Endothelial cell of umbilical vein (primary cell): ENCODE measurements at regions of chr3 and their contacts with region 1.

Region 1: DNA sequence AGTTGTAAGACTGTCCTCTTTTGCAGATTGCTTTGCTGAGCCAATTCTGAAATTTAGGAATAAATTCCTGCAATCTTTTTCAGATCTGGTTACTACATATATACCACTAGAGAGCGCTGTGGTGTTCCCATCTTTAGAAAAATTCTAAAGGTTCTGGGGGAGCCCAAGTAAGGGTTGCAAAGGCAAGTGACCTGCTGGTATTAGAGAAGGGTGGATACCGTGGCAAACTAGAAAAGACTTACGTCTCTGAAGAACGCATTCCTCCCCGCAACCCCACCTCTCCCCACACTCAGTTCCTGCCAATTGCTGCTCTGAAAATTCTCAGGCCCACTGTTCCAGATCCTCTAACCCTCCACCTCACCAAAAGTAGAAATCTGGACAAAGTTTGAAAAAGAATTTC is 48.5 kb downstream of the EFHB start:
- DNase-seq: peak; percentile 47
- H3K4me3 ChIP-seq: no peak overlapping the region
- H3K27ac ChIP-seq: no peak overlapping the region
- H3K4me1 ChIP-seq: peaks cover 20% of the 10 kb centered on the region
- H3K27me3 ChIP-seq: no peaks in the 10 kb centered on the region
- CTCF ChIP-seq: peak; percentile 46 to 51
- POLR2A ChIP-seq: no peak

Region 2: DNA sequence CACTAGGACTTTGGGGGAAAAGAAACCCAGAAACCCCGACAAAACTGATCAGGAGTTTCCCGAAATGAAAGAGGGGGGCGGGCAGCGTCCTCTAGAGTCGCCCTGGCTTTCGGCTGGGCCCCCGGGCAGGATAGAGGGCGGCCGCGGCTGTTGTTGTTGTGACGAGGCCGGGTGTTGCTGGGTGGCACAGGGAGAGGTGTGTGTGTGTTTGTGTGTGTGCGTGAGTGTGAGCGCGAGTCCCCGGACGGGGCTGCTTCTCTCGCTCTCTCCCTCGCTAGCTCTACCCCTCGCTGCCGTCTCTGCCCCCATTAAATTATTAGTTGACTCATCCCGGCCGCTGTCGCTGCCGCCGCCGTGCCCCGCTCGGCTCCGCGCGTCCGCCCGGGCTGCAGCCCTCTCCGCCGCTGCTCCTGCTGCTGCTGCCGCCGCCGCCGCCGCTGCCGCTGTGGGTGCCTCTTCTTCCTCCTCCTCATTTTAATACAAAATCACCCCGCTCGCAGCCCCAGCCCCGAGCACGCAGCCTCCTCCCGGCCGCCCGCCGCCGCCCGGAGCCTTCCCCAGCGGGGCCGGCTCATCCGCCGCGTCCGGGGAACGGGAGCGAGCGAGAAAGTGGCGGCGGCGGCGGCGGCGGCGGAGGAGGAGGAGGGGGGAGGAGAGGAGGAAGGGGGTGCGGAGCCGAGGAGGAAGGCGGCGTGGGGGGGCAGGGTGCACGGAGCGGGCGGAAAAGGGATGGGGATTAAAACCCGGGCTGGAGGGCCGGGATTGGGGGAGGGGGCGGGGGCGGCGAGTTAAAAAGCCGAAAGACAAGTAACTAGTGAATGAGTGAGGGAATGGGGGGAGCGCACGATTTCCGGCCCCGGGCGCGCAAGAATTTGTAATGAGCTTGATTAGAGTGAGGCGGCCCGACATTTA is 1460.5 kb before region 1 on chr3 and contains the start of gene SATB1:
- CTCF ChIA-PET with region 1: no interaction called
- POLR2A ChIA-PET with region 1: no interaction called
- dilution Hi-C with region 1: no loop called
- intact Hi-C with region 1: loop called (anchors 5 kb)
- DNase-seq: peak; percentile 48
- H3K4me3 ChIP-seq: peak within 1 kb of the TSS; percentile 66 to 72 (median 68)
- H3K27ac ChIP-seq: no peak within 1 kb of the TSS
- H3K4me1 ChIP-seq: peaks cover 8% of the 10 kb centered on the region
- H3K27me3 ChIP-seq: peaks cover 10 to 39% of the 10 kb centered on the region in 2 experiments
- CTCF ChIP-seq: no peak
- POLR2A ChIP-seq: no peak
- total RNA-seq, gene SATB1: 6.2 and 6.7 TPM in 2 replicates

Region 3: GRCh38 chr3:19901337-19901736 is 15.9 kb after region 1 on chr3:
- CTCF ChIA-PET with region 1: interaction called, 46 read pairs
- POLR2A ChIA-PET with region 1: no interaction called
- dilution Hi-C with region 1: no loop called
- intact Hi-C with region 1: loop called (anchors 2 kb)
- DNase-seq: peak; percentile 31
- H3K4me3 ChIP-seq: no peak overlapping the region
- H3K27ac ChIP-seq: no peak overlapping the region
- H3K4me1 ChIP-seq: no peaks in the 10 kb centered on the region
- H3K27me3 ChIP-seq: no peaks in the 10 kb centered on the region
- CTCF ChIP-seq: no peak
- POLR2A ChIP-seq: no peak

Region 4: DNA sequence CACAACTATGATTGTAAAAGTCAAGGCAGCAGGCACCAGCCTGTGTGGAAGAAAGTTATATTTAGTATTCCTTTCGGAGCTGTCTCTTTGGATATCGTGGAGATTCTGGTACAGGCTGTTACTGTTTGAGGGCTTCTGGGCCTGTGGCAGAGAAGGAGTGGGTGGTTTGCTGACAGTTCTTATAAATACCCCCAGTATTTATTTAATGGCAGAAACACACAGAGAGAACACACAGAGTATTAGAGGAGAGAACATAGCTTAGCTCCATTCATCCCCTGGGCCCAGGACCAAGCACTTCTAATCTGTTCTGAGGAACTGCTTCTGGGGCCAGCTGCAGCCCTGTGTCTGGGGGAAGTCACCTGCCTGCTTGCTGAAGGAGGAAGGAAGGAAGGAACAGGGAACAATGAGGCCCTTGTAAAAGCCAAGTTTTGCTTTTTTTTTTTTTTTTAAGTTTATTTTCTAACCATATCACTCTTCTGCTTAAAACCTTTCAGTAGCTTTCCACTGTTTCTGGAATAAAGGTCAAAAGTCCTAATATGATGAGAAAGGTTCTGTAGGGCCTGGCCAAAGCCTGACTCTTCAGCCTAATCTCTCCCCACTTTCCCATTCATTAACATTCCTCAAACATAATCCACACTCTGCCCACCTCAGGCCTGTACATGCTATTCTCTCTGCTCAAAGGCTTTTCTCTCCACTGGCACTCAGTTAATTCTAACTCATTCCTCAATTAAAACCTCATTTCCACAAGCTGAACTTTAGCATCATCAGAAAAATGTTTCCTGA is 138.3 kb after region 1 on chr3:
- CTCF ChIA-PET with region 1: interaction called, 4 read pairs
- POLR2A ChIA-PET with region 1: no interaction called
- dilution Hi-C with region 1: no loop called
- intact Hi-C with region 1: loop called (anchors 1 kb)
- DNase-seq: peak; percentile 70
- H3K4me3 ChIP-seq: no peak overlapping the region
- H3K27ac ChIP-seq: peak overlapping the region; percentile 13
- H3K4me1 ChIP-seq: peaks cover 21% of the 10 kb centered on the region
- H3K27me3 ChIP-seq: no peaks in the 10 kb centered on the region
- CTCF ChIP-seq: no peak
- POLR2A ChIP-seq: no peak

Region 5: GRCh38 chr3:20154931-20155330 is 269.5 kb after region 1 on chr3:
- CTCF ChIA-PET with region 1: interaction called, 3 read pairs
- POLR2A ChIA-PET with region 1: no interaction called
- dilution Hi-C with region 1: no loop called
- intact Hi-C with region 1: loop called (anchors 5 kb)
- DNase-seq: no peak
- H3K4me3 ChIP-seq: no peak overlapping the region
- H3K27ac ChIP-seq: no peak overlapping the region
- H3K4me1 ChIP-seq: no peaks in the 10 kb centered on the region
- H3K27me3 ChIP-seq: no peaks in the 10 kb centered on the region
- CTCF ChIP-seq: no peak
- POLR2A ChIP-seq: no peak

Region 6: GRCh38 chr3:20256144-20256543 is 370.7 kb after region 1 on chr3:
- CTCF ChIA-PET with region 1: no interaction called
- POLR2A ChIA-PET with region 1: no interaction called
- dilution Hi-C with region 1: no loop called
- intact Hi-C with region 1: loop called (anchors 2 kb)
- DNase-seq: peak; percentile 92
- H3K4me3 ChIP-seq: peak overlapping the region in 1 of 3 experiments; percentile 11
- H3K27ac ChIP-seq: peak overlapping the region; percentile 83
- H3K4me1 ChIP-seq: peaks cover 18% of the 10 kb centered on the region
- H3K27me3 ChIP-seq: no peaks in the 10 kb centered on the region
- CTCF ChIP-seq: no peak
- POLR2A ChIP-seq: no peak

Region 7: GRCh38 chr3:20307383-20307782 is 421.9 kb after region 1 on chr3:
- CTCF ChIA-PET with region 1: no interaction called
- POLR2A ChIA-PET with region 1: no interaction called
- dilution Hi-C with region 1: no loop called
- intact Hi-C with region 1: no loop called
- DNase-seq: no peak
- H3K4me3 ChIP-seq: no peak overlapping the region
- H3K27ac ChIP-seq: no peak overlapping the region
- H3K4me1 ChIP-seq: no peaks in the 10 kb centered on the region
- H3K27me3 ChIP-seq: no peaks in the 10 kb centered on the region
- CTCF ChIP-seq: no peak
- POLR2A ChIP-seq: no peak